ENCODE measurements at regions of chr17 and their contacts with region 1.

Region 1: GRCh38 chr17:80605326-80606066 is 60.9 kb downstream of the RPTOR start:
- DNase-seq: peak; percentile 64 to 85
- H3K4me3 ChIP-seq: no peak overlapping the region
- H3K27ac ChIP-seq: no peak overlapping the region
- H3K4me1 ChIP-seq: 0 out of 2 replicates have a peak, but pooled peaks cover 6% of the 10 kb centered on the region
- H3K27me3 ChIP-seq: no peaks in the 10 kb centered on the region
- CTCF ChIP-seq: no peak

Region 2: GRCh38 chr17:82320956-82321927 is 1715.7 kb after region 1 on chr17:
- CTCF ChIA-PET with region 1: no interaction called
- POLR2A ChIA-PET with region 1: interaction called, 10 read pairs
- intact Hi-C with region 1: no loop called
- DNase-seq: peak in 1 of 2 experiments; percentile 34
- H3K4me3 ChIP-seq: no peak overlapping the region
- H3K27ac ChIP-seq: no peak overlapping the region
- H3K4me1 ChIP-seq: no peaks in the 10 kb centered on the region
- H3K27me3 ChIP-seq: 0 out of 2 replicates have a peak, but pooled peaks cover 6% of the 10 kb centered on the region
- CTCF ChIP-seq: peak; percentile 82